GM10248 (cell line): ENCODE measurements at regions of chr16 and their contacts with region 1.

Region 1: GRCh38 chr16:2500918-2501750 is 12.6 kb upstream of the ATP6V0C start:
- DNase-seq: peak; percentile 89
- CTCF ChIP-seq: peak; percentile 94

Region 2: GRCh38 chr16:2194852-2195321 is 306.2 kb before region 1 on chr16:
- CTCF ChIA-PET with region 1: interaction called, 20 read pairs
- POLR2A ChIA-PET with region 1: no interaction called
- DNase-seq: peak; percentile 75
- CTCF ChIP-seq: peak; percentile 55

Region 3: GRCh38 chr16:2251483-2252240 is 249.5 kb before region 1 on chr16 and contains the start of gene ECI1:
- CTCF ChIA-PET with region 1: interaction called, 14 read pairs
- POLR2A ChIA-PET with region 1: no interaction called
- DNase-seq: peak; percentile 100
- CTCF ChIP-seq: peak; percentile 64

Region 4: DNA sequence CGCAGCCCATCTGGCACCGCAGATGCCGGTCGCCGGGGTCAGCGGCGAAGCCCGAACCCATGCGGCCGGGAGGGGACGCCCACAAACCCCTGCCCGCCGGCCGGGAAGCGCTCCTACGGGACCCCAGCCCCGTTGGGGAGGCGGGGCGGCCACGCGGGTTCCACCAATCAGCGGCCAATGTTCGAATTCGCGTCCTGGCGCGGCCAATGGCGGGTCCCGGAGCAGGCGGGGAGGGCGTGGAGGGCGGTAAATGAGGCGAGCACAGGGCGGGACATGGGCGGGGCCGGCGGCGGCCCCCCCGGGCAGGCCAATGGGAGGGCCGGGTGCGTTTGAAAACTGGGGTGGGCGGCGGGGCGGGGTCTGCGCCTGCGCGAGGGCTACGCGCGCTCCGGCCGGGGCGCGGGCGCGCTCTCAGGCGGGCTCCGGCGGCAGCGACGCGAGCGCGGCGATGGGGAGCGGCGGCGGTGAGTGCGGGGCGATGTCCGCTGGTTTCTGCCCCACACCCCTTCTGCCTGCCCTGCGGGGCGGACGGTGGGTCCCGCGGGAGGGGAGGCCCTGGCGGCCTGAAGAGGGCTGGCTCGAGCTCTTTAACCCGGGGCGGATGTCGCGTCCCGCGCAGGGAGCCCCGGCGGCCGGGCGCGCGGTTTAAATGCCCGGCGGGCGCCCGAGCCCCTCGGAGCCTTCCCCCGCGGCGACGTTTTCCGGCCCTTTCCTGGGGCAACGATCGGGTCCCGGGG is 71.9 kb before region 1 on chr16 and contains the start of gene CCNF:
- CTCF ChIA-PET with region 1: interaction called, 17 read pairs
- POLR2A ChIA-PET with region 1: no interaction called
- DNase-seq: peak; percentile 100
- CTCF ChIP-seq: no peak

Region 5: DNA sequence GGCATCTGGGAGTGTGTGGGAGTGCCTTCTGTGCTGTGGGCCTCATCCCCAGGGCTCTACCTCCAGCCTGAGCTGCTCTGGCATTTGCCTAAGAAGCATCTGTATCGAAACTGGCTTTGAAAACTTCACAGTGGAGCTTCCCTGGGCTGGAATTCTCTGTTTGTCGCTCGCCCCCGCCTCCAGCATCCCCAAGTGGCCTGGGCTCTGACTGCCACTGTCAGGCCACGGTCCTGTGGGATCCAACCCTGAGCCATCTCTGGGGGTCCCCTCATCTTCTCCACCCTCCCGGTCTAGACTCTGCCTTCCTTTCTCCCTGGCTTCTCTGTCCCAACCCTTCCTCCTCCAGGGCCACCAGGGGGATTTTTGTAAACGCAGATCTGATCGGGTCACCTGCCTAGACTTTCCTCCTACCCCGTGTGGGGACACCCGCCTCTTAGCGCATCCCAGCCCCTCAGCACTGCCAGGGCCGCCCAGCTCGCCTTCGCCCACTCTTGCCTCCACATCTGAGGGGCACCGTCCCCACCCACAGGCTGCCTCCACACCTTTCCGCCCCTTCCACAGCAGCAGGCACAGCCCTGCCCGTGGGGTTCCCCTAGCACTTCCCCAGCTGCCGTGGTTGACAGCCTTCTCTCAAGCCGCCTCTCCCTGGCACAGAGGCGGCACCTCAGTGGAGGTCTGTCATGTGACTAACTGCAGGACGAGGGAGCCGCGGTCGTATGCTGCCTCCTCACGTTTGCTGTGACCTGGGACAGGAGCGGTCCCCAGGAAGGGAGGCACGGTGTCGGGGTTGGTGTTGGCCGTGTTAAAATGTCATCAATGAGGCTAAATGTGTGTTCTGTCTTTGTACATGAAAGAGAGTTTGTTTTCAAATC is 14.3 kb before region 1 on chr16:
- CTCF ChIA-PET with region 1: interaction called, 36 read pairs
- POLR2A ChIA-PET with region 1: no interaction called
- DNase-seq: peak; percentile 85
- CTCF ChIP-seq: peak; percentile 64

Region 6: DNA sequence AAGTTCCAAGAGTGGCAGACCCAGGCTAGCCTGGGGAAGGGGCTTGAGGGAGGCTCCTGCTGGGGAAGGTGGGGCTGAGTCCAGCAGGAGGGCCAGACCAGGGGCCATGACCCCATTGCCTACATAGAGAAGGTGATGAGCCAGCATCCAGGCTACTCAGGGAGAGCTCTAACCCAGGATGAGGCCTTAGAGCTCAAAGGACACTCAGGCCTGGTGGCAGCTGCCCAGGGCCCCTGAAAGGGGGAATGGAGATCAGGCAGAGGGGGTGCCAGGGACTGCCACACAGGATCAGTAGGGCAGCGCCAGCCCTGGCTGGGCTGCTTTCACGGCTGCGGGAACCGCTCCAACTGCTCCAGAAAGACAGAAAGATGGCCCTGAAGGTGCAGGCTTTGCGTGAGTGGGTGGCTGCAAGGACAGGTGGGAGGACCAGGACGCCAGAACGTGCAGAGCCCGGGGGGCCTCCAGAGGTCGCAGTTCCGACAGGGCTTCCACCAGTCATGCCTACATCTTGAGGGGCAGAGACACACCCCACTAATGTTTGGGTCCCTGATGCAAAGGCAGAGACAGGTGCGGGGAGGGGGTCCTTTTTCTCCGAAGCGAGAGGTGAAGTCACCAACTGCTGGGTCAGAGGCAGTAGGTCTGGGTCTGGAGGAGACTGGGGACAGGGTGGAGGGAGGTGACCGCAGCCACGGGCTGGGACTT is 11.7 kb after region 1 on chr16:
- CTCF ChIA-PET with region 1: interaction called, 24 read pairs
- POLR2A ChIA-PET with region 1: interaction called, 4 read pairs
- DNase-seq: peak; percentile 53
- CTCF ChIP-seq: peak; percentile 31

Region 7: GRCh38 chr16:2770057-2770951 is 269.2 kb after region 1 on chr16:
- CTCF ChIA-PET with region 1: no interaction called
- POLR2A ChIA-PET with region 1: no interaction called
- DNase-seq: no peak
- CTCF ChIP-seq: peak; percentile 28